Pancreas (tissue), 10 donors: ENCODE measurements at regions of chr6 and their contacts with region 1.

Region 1: DNA sequence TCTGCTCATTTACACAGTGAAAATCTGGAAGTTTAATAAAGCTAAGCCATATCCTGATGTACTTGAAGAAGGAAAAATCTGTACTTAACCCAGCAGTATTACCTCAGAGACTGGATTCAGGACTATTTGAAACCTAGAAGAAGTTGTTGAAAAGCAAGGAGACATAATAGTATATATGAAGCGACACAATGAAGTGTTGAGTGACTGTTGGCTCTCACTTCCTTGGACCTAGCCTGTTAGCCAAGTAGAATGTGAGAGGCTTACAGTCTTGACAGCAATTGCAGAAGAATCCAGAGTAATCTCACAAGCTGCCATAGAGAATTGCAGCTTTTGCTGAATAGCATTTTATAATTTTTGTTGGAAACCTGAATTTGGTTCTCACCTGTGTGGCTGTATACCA is 26.7 kb downstream of the SMAP1 start:
- DNase-seq: no peak
- ATAC-seq: no peak
- H3K4me3 ChIP-seq: no peak overlapping the region
- H3K27ac ChIP-seq: no peak overlapping the region
- H3K4me1 ChIP-seq: no peaks in the 10 kb centered on the region
- H3K27me3 ChIP-seq: no peaks in the 10 kb centered on the region
- CTCF ChIP-seq: no peak

Region 2: GRCh38 chr6:70551566-70551965 is 142.8 kb before region 1 on chr6:
- intact Hi-C with region 1: loop called in 1 of 3 experiments (anchors 10 kb)
- DNase-seq: no peak
- ATAC-seq: no peak
- H3K4me3 ChIP-seq: no peak overlapping the region
- H3K27ac ChIP-seq: no peak overlapping the region
- H3K4me1 ChIP-seq: no peaks in the 10 kb centered on the region
- H3K27me3 ChIP-seq: no peaks in the 10 kb centered on the region
- CTCF ChIP-seq: no peak

Region 3: DNA sequence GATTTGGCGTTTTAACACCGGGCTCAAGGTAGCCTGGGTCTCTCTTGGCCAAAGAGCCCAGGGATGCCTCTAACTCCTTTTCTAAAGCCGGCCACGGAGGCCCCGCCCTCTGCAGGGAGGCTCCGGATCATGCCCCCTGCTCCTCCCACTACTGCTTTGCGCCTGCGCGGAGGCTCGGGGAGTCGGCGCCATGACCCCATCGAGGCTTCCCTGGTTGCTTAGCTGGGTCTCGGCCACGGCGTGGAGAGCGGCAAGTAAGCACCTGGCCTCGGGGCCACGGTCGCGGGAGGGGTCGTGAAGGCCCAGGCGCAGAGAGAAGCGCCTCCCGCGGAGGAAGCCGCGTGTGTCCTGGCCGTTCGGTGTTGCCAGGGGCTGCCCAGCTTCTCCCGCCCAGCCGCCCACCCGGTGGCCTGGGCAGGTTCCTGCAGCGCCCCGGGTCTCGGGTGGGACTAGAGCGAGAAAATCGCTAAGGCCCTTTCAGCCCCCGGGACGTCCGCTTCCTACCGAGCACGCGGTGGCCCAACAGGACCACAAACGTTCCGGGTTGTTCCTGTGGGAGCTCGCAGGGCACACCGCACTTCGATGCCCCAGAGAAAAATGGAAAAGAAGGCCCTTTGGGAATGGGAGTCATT is 127.5 kb before region 1 on chr6 and contains the start of gene SDHAF4:
- intact Hi-C with region 1: no loop called
- DNase-seq: peak; percentile 91 to 98 (median 94)
- ATAC-seq: peak; percentile 100
- H3K4me3 ChIP-seq: peak within 1 kb of the TSS; percentile 52 to 81 (median 72)
- H3K27ac ChIP-seq: peak within 1 kb of the TSS; percentile 54 to 84 (median 61)
- H3K4me1 ChIP-seq: no peaks in the 10 kb centered on the region
- H3K27me3 ChIP-seq: no peaks in the 10 kb centered on the region
- CTCF ChIP-seq: no peak
- total RNA-seq, gene SDHAF4: 2.9 to 5.5 (median 4.1) TPM